Endothelial cell of umbilical vein (primary cell): ENCODE measurements at regions of chr4 and their contacts with region 1.

Region 1: GRCh38 chr4:176123710-176124407 is 58.2 kb downstream of the WDR17 start:
- DNase-seq: peak; percentile 5
- H3K4me3 ChIP-seq: no peak overlapping the region
- H3K27ac ChIP-seq: no peak overlapping the region
- H3K4me1 ChIP-seq: no peaks in the 10 kb centered on the region
- H3K27me3 ChIP-seq: no peaks in the 10 kb centered on the region
- CTCF ChIP-seq: peak; percentile 50 to 57
- POLR2A ChIP-seq: no peak

Region 2: GRCh38 chr4:175953960-175954521 is 169.8 kb before region 1 on chr4:
- CTCF ChIA-PET with region 1: no interaction called
- POLR2A ChIA-PET with region 1: no interaction called
- dilution Hi-C with region 1: no loop called
- intact Hi-C with region 1: loop called (anchors 5 kb)
- DNase-seq: no peak
- H3K4me3 ChIP-seq: no peak overlapping the region
- H3K27ac ChIP-seq: no peak overlapping the region
- H3K4me1 ChIP-seq: no peaks in the 10 kb centered on the region
- H3K27me3 ChIP-seq: no peaks in the 10 kb centered on the region
- CTCF ChIP-seq: no peak
- POLR2A ChIP-seq: no peak

Region 3: DNA sequence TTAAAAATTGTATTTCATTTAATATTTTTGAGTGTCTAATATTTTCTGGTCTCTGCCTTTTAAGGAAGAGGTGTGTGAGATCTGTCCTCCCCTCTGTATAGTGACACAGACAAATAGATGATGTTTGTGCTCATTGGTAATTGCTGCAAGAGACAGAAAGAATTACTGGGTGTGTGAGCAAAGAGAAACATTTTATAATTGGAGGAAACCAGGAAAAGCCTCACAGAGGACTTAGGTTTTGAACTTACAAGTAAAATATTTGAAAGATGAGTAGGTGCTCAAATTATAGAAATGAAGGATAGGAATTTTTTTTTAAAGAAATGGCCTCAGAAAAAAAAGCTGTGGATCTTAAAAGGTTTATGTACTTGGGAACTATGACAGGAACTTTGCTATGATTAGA is 345.7 kb after region 1 on chr4:
- CTCF ChIA-PET with region 1: no interaction called
- POLR2A ChIA-PET with region 1: no interaction called
- dilution Hi-C with region 1: no loop called
- intact Hi-C with region 1: no loop called
- DNase-seq: no peak
- H3K4me3 ChIP-seq: no peak overlapping the region
- H3K27ac ChIP-seq: no peak overlapping the region
- H3K4me1 ChIP-seq: no peaks in the 10 kb centered on the region
- H3K27me3 ChIP-seq: no peaks in the 10 kb centered on the region
- CTCF ChIP-seq: no peak
- POLR2A ChIP-seq: no peak